Panc1 (cell line): ENCODE measurements at regions of chr5 and their contacts with region 1.

Region 1: GRCh38 chr5:159880671-159881070 is 35.6 kb upstream of the ADRA1B start:
- DNase-seq: no peak
- ATAC-seq: no peak
- H3K4me3 ChIP-seq: no peak overlapping the region
- H3K27ac ChIP-seq: no peak overlapping the region
- H3K4me1 ChIP-seq: 0 out of 2 replicates have a peak, but pooled peaks cover 5% of the 10 kb centered on the region
- H3K27me3 ChIP-seq: no peaks in the 10 kb centered on the region
- CTCF ChIP-seq: no peak

Region 2: GRCh38 chr5:159826351-159827214 is 54.1 kb before region 1 on chr5:
- CTCF ChIA-PET with region 1: interaction called, 15 read pairs
- POLR2A ChIA-PET with region 1: no interaction called
- in situ Hi-C with region 1: no loop called
- intact Hi-C with region 1: no loop called
- DNase-seq: peak; percentile 75
- ATAC-seq: peak; percentile 87
- H3K4me3 ChIP-seq: no peak overlapping the region
- H3K27ac ChIP-seq: peak overlapping the region; percentile 55
- H3K4me1 ChIP-seq: peaks cover 10% of the 10 kb centered on the region
- H3K27me3 ChIP-seq: no peaks in the 10 kb centered on the region
- CTCF ChIP-seq: no peak